Naive thymus-derived CD8-positive, alpha-beta T cell (primary cell): ENCODE measurements at regions of chr20 and their contacts with region 1.

Region 1: DNA sequence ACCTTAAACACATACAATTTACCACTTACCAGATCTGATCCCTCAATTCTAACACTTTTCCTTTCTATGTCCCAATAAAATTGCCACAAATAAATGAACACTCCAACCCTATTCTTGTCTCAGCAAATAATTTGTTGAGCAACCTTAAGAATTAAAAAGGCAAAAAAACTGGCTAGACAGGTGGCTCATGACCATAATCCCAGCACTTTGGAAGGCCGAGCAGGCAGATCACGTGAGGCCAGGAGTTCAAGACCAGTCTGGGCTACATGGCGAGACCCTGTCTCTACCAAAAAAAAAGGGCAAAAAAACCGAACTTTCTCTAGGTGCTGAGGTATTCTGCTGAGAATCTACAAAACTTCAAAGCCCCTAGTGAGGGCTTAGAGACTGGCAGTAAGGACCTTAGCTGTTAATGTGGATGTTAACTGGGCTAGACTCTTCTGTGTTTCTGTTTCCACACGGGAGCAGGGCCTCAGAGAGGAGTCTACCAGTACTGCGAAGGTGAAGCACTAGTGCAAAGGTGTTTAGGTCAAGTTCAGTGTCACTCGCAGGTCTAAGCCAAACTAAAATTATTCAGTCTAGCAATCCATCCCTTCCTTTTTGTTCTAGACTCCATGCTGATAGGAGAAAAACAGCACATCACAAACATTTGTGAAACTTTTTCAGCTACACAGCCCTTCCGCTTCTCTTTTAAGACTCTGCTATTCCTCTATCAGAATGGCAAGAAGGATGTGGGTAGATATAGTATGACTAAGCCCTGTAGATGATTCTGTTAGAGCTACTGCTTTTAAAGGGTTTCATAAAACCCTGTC is 2.6 kb downstream of the FASTKD5 start:
- DNase-seq: peak in 3 of 10 donors; percentile 31 to 62 (median 53)
- ATAC-seq: peak; percentile 79 to 83
- H3K4me3 Mint-ChIP-seq: peak overlapping the region; percentile 66 to 99 (median 69)
- H3K27ac Mint-ChIP-seq: peak overlapping the region; percentile 59 to 98 (median 88)
- H3K4me1 Mint-ChIP-seq: peaks cover 36 to 73% (median 69%) of the 10 kb centered on the region in 4 donors
- H3K27me3 Mint-ChIP-seq: no peaks in the 10 kb centered on the region

Region 2: GRCh38 chr20:3121271-3121911 is 35.6 kb before region 1 on chr20:
- POLR2A ChIA-PET with region 1: interaction called, 25 read pairs
- DNase-seq: peak in 8 of 10 donors; percentile 20 to 73 (median 54)
- ATAC-seq: peak; percentile 88 to 91
- H3K4me3 Mint-ChIP-seq: peak overlapping the region; percentile 60 to 89 (median 86)
- H3K27ac Mint-ChIP-seq: peak overlapping the region; percentile 97 to 100 (median 99)
- H3K4me1 Mint-ChIP-seq: peaks cover 22 to 60% (median 39%) of the 10 kb centered on the region in 4 donors
- H3K27me3 Mint-ChIP-seq: no peaks in the 10 kb centered on the region

Region 3: GRCh38 chr20:3204124-3204822 is 47.3 kb after region 1 on chr20 and contains the start of gene DDRGK1:
- POLR2A ChIA-PET with region 1: interaction called, 15 read pairs
- DNase-seq: peak; percentile 83 to 98 (median 90)
- ATAC-seq: peak; percentile 86 to 88
- H3K4me3 Mint-ChIP-seq: peak within 1 kb of the TSS; percentile 93 to 97 (median 95)
- H3K27ac Mint-ChIP-seq: peak within 1 kb of the TSS; percentile 91 to 98 (median 96)
- H3K4me1 Mint-ChIP-seq: peaks cover 16 to 41% (median 39%) of the 10 kb centered on the region in 4 donors
- H3K27me3 Mint-ChIP-seq: no peaks in the 10 kb centered on the region
- polyA plus RNA-seq, gene DDRGK1: 39.7 to 50.5 (median 44.1) TPM

Region 4: DNA sequence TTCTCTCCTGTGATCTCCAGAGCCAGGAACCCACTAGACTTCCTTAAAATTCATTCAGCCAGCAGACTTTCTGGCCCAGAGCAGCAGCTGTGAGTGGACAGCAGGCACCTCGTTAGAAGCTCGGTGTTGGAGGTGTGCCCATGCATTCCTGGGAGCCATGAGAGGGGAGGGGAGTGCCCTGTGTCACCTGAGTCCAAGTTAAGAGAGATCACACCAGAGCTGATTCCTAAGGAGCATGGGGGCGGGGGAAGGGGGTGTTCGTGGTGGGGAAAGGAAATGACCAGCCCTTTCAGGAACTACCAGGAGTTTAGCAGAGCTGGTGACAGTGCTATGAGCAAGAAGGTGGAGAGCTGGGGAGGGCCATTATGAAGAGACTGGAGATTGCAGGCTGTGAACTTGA is 459.2 kb after region 1 on chr20:
- POLR2A ChIA-PET with region 1: no interaction called
- DNase-seq: no peak
- ATAC-seq: no peak
- H3K4me3 Mint-ChIP-seq: no peak overlapping the region
- H3K27ac Mint-ChIP-seq: no peak overlapping the region
- H3K4me1 Mint-ChIP-seq: peaks cover 0 to 3% (median 0%) of the 10 kb centered on the region in 4 donors
- H3K27me3 Mint-ChIP-seq: no peaks in the 10 kb centered on the region